Psoas muscle (tissue), 8 donors: ENCODE measurements at regions of chr12 and their contacts with region 1.

Region 1: DNA sequence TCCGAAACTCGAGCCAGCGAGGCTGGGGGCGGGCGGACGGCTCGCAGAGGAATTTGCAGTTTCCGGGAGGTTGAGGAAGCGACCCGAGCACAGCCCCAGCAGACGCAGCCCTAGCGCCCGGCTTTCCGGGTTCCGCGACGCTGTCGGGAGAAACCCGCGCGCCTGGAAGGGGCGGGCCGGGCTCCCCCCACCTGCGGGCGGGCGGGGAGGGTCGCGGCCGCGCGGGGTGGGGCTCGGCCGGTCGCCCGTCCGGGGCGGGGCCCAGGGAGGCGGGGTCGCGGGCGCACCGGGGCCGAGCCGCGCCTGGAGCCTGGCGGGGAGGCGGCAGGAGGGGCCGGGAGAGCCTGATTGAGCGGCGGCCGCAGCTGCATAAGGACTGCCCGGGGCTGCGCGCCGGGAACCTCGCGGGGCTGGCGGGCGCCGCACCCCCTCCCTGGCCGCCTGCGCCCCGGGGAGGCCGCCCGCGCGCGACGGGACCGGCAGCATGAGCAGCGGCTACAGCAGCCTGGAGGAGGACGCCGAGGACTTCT is at the start of gene RASSF3:
- DNase-seq: peak; percentile 70 to 84
- ATAC-seq: peak; percentile 78 to 87 (median 82)
- H3K4me3 ChIP-seq: peak within 1 kb of the TSS; percentile 93
- H3K27ac ChIP-seq: peak within 1 kb of the TSS; percentile 89
- H3K4me1 ChIP-seq: no peaks in the 10 kb centered on the region
- H3K27me3 ChIP-seq: no peaks in the 10 kb centered on the region
- CTCF ChIP-seq: no peak
- total RNA-seq, gene RASSF3: 7.0 to 30.6 (median 19.0) TPM

Region 2: GRCh38 chr12:64551698-64552097 is 58.5 kb before region 1 on chr12:
- intact Hi-C with region 1: loop called (anchors 5 kb)
- DNase-seq: no peak
- ATAC-seq: no peak
- H3K4me3 ChIP-seq: no peak overlapping the region
- H3K27ac ChIP-seq: no peak overlapping the region
- H3K4me1 ChIP-seq: peaks cover 3% of the 10 kb centered on the region
- H3K27me3 ChIP-seq: no peaks in the 10 kb centered on the region
- CTCF ChIP-seq: no peak

Region 3: DNA sequence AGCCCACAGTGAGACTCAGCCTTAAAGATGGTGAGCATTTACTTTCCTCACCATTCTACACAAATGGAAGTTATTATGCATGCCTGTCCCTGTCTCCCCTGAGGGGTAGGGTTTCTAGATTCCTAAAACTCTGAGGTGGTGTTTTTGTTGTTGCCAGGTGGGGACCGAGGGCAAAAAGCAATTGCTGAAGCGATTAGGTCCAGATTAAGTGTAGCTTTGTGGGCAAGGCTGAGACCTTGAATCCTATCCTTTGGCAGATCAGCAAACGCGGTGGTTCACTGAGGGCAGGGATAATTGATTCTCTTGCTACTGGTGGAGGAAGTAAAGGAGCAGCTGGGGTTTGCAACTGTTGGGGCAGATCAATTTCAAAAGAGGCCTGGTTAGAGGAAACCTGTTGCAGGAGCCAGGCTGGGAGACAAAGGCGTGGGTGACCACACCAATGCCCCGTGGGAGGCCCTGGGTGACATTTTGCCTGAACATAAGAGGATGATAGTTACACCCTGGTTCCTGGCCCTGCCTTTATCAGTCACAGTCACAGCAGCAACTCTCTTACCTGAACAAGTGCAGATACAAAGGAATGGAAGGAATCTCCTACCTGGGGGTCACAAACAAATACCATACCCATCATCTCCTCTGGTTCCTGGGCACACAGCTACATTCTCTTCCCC is 43.3 kb before region 1 on chr12:
- intact Hi-C with region 1: loop called in 1 of 2 experiments (anchors 5 kb)
- DNase-seq: no peak
- ATAC-seq: peak in 1 of 4 donors; percentile 32
- H3K4me3 ChIP-seq: no peak overlapping the region
- H3K27ac ChIP-seq: no peak overlapping the region
- H3K4me1 ChIP-seq: peaks cover 21% of the 10 kb centered on the region
- H3K27me3 ChIP-seq: no peaks in the 10 kb centered on the region
- CTCF ChIP-seq: no peak

Region 4: GRCh38 chr12:64696080-64696741 is 86.0 kb after region 1 on chr12:
- intact Hi-C with region 1: loop called in 1 of 2 experiments (anchors 5 kb)
- DNase-seq: no peak
- ATAC-seq: no peak
- H3K4me3 ChIP-seq: no peak overlapping the region
- H3K27ac ChIP-seq: no peak overlapping the region
- H3K4me1 ChIP-seq: peaks cover 9% of the 10 kb centered on the region
- H3K27me3 ChIP-seq: no peaks in the 10 kb centered on the region
- CTCF ChIP-seq: peak; percentile 35